Vagina (tissue), 2 donors: ENCODE measurements at regions of chr7 and their contacts with region 1.

Region 1: DNA sequence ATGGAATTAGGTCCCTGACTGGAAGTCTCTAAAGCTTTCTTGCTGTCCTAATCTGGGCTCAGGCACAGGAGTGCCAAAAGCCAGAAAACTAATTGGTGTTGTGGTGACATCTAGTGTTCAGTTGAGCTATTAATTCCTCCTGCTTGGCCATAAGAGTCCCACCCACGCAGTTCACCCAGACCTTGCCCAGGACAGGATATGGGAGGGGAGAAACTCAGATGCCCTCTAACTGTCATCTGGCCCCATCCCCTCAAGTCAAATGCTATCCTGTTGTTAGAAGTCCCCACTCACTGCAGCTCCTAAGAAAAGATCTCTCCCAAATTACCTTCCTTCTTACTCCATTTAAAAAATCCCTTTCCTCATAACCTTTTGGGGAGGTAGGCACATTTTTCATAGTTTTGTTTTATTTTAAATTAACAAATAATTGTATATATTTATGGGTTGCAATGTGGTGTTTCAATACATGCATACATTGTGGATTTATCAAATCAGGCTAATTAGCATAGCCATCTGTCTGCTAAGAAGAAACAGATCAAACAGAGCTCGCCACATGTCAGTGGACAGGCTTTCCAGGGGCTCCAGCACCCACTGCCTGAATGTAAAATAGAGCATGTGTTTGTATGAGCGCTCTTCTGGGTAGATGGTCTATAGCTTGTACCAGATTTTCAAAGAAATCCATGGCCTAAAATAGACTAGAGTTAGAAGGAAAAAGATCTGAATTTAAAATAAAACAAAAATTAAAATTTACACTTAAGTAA is 84.0 kb downstream of the GSAP start:
- DNase-seq: no peak
- H3K4me3 ChIP-seq: no peak overlapping the region
- H3K27ac ChIP-seq: no peak overlapping the region
- H3K4me1 ChIP-seq: peaks cover 43% of the 10 kb centered on the region
- H3K27me3 ChIP-seq: no peaks in the 10 kb centered on the region
- CTCF ChIP-seq: peak; percentile 54 to 78 (median 67)
- POLR2A ChIP-seq: no peak

Region 2: GRCh38 chr7:77258014-77258413 is 74.1 kb before region 1 on chr7:
- intact Hi-C with region 1: loop called (anchors 10 kb)
- DNase-seq: no peak
- H3K4me3 ChIP-seq: no peak overlapping the region
- H3K27ac ChIP-seq: no peak overlapping the region
- H3K4me1 ChIP-seq: no peaks in the 10 kb centered on the region
- H3K27me3 ChIP-seq: no peaks in the 10 kb centered on the region
- CTCF ChIP-seq: no peak
- POLR2A ChIP-seq: no peak